WTC11 (cell line): ENCODE measurements at regions of chr15 and their contacts with region 1.

Region 1: GRCh38 chr15:77543159-77543882 is 89.4 kb downstream of the LINGO1 start:
- DNase-seq: peak; percentile 90
- ATAC-seq: peak; percentile 76
- H3K4me3 Mint-ChIP-seq: no peak overlapping the region; the same call in 1 of the 2 replicates
- H3K27ac Mint-ChIP-seq: 0 out of 2 replicates have a peak overlapping the region, but pooled peaks have one; percentile 53
- H3K4me1 Mint-ChIP-seq: peaks cover 49% of the 10 kb centered on the region
- H3K27me3 Mint-ChIP-seq: peaks cover 5% of the 10 kb centered on the region
- CTCF ChIP-seq: peak; percentile 87

Region 2: DNA sequence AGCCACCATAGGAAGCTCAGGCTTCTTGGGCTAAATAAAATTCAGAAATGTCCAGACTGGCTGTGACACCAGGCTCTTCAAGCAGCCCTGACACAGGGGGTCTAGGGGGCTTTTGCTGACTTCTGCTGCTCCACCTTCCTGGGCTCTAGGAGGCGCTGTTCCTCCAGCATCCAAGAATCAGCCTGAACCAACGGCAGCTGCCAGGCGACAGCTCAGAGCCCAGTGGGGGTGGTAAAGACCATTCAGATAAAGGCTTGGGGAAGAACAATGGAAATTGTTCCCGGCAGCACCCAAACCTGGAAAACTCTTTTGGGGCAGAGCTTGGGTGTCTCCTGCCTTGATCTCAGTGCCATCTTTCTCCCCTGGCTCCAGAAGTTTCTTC is 570.0 kb before region 1 on chr15:
- CTCF ChIA-PET with region 1: interaction called, 13 read pairs
- POLR2A ChIA-PET with region 1: no interaction called
- DNase-seq: peak; percentile 84
- ATAC-seq: peak; percentile 97
- H3K4me3 Mint-ChIP-seq: no peak overlapping the region
- H3K27ac Mint-ChIP-seq: no peak overlapping the region
- H3K4me1 Mint-ChIP-seq: peaks cover 4% of the 10 kb centered on the region
- H3K27me3 Mint-ChIP-seq: no peaks in the 10 kb centered on the region
- CTCF ChIP-seq: peak; percentile 67

Region 3: GRCh38 chr15:77118882-77119321 is 424.4 kb before region 1 on chr15:
- CTCF ChIA-PET with region 1: interaction called, 93 read pairs
- POLR2A ChIA-PET with region 1: no interaction called
- DNase-seq: no peak
- ATAC-seq: peak; percentile 68
- H3K4me3 Mint-ChIP-seq: no peak overlapping the region
- H3K27ac Mint-ChIP-seq: no peak overlapping the region
- H3K4me1 Mint-ChIP-seq: peaks cover 28% of the 10 kb centered on the region
- H3K27me3 Mint-ChIP-seq: no peaks in the 10 kb centered on the region
- CTCF ChIP-seq: peak; percentile 35

Region 4: DNA sequence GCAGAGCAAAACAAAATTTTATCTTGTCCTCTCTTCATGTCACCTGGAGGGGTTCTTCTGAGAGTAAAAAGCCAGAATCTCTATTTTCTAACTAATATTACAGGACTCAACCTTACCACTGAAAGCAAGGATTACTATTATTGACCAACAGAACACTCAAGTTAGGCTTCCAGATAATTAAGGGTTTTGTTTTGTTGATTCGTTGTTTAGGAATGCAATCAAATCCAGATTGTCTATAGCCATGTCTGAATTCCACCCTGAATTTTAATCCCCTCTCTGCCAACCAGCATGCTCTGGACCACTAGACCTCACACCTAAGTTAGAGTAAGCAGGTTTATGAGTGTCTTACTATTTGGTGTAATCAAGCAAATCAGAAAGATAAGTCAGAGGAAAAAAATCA is 214.1 kb before region 1 on chr15:
- CTCF ChIA-PET with region 1: no interaction called
- POLR2A ChIA-PET with region 1: no interaction called
- DNase-seq: no peak
- ATAC-seq: no peak; the same call in 1 of the 2 replicates
- H3K4me3 Mint-ChIP-seq: no peak overlapping the region
- H3K27ac Mint-ChIP-seq: no peak overlapping the region
- H3K4me1 Mint-ChIP-seq: peaks cover 27% of the 10 kb centered on the region
- H3K27me3 Mint-ChIP-seq: no peaks in the 10 kb centered on the region
- CTCF ChIP-seq: no peak

Region 5: DNA sequence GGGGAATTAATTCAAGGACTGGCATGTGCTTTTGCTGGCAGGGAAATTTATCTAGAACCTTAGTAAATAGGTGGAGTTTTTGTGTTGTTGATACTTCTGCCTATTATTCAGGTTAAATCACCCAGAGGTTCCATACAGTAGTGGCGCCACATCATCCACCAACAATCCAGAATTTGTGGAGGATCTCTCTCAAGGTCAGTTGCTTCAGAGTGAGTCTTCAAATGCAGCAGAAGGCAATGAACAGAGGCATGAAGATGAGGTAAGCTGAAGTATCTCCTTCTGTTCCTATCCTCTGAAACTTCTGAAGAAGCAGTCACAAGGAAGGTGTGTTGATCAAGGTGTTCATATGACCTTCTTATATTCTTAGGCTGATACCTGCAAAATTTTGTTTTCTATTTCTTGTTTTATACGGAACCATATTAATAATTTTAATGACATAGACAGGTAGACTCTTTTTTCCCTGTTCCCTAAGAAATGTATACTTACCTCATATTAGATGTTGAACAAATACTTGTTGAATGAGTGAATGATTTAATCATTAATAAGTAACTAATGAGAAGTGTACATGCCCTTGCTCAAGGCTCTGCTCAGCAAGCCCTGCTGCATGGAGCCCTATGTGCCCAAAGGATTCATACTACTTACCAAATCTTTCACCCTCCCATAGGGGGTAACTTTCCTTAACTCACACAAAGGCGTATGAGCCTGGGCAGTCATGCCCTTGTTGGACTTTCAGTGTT is 79.0 kb before region 1 on chr15:
- CTCF ChIA-PET with region 1: interaction called, 15 read pairs
- POLR2A ChIA-PET with region 1: no interaction called
- DNase-seq: no peak
- ATAC-seq: no peak
- H3K4me3 Mint-ChIP-seq: no peak overlapping the region
- H3K27ac Mint-ChIP-seq: no peak overlapping the region
- H3K4me1 Mint-ChIP-seq: peaks cover 23% of the 10 kb centered on the region
- H3K27me3 Mint-ChIP-seq: no peaks in the 10 kb centered on the region
- CTCF ChIP-seq: no peak

Region 6: GRCh38 chr15:77514635-77515402 is 28.5 kb before region 1 on chr15:
- CTCF ChIA-PET with region 1: interaction called, 87 read pairs
- POLR2A ChIA-PET with region 1: interaction called, 6 read pairs
- DNase-seq: no peak
- ATAC-seq: peak; percentile 33
- H3K4me3 Mint-ChIP-seq: no peak overlapping the region
- H3K27ac Mint-ChIP-seq: peak overlapping the region; percentile 26
- H3K4me1 Mint-ChIP-seq: peaks cover 71% of the 10 kb centered on the region
- H3K27me3 Mint-ChIP-seq: no peaks in the 10 kb centered on the region; the same call in 1 of the 2 replicates
- CTCF ChIP-seq: no peak

Region 7: DNA sequence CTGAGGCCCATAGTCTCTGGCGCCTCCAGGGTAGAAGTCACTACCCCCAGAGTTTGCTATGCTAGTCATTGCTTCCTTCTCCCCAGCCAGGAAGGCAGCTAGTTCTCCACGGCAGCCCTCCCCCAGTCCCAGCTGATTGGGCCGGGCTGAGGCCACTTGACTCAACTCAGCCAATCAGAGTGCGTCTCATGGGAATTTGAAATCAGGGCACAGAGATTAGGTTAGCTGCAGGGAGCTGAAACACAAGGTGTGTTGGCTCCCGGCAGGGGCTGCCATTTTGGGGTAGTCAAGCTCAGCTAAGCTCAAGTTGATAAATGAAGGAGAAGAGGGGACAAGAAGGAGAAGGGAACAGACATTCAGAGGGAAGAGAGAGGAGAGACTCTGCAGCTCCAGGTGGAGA is 56.6 kb after region 1 on chr15:
- CTCF ChIA-PET with region 1: interaction called, 20 read pairs
- POLR2A ChIA-PET with region 1: no interaction called
- DNase-seq: peak; percentile 53
- ATAC-seq: peak; percentile 53
- H3K4me3 Mint-ChIP-seq: no peak overlapping the region
- H3K27ac Mint-ChIP-seq: peak overlapping the region; percentile 95
- H3K4me1 Mint-ChIP-seq: peaks cover 37% of the 10 kb centered on the region
- H3K27me3 Mint-ChIP-seq: no peaks in the 10 kb centered on the region; the same call in 1 of the 2 replicates
- CTCF ChIP-seq: no peak

Region 8: DNA sequence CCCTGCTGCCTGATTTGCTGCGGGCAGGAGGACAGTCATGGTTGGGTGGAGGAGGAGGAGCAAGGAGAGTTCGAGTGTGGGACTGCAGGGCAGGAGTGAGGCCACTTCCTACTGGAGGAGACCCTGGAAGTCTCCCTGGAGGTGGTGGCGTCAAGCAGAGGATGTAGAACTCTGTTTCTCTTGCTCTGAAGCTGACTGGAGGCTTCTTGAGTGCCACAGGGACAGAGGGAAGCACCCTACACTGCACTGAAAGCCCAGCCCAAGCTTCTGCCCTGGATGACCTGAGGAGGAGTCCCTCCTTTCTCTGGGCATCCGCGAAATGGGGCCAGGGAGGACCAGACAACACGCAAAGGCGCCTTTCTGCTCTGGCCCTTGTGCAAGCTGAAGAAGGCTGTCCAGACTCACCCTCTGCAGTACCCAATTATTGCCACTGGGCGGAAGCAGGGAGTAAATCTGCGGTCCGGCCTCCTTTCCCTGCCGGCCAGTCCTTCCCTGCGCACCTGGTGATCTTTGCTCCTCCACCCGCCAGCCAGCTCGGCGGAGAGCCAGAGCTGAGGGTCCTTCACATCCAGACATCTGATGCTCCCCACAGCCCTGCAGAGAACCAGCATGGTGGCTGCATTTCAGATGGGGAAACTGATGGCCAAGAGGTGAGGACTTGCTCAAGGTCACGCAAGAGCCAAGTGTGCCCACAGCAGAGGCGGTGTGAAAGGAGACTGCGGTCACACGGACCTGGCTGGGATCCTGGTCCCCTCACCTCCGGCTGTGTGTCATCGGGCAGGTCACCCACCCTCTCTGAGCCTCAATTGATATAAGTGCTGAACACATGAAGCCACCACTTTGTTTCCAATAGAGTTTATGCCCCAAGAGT is 327.1 kb after region 1 on chr15:
- CTCF ChIA-PET with region 1: interaction called, 12 read pairs
- POLR2A ChIA-PET with region 1: no interaction called
- DNase-seq: peak; percentile 92
- ATAC-seq: peak; percentile 78
- H3K4me3 Mint-ChIP-seq: no peak overlapping the region
- H3K27ac Mint-ChIP-seq: no peak overlapping the region
- H3K4me1 Mint-ChIP-seq: peaks cover 4% of the 10 kb centered on the region; the same call in 1 of the 2 replicates
- H3K27me3 Mint-ChIP-seq: no peaks in the 10 kb centered on the region; the same call in none of the 2 replicates
- CTCF ChIP-seq: peak; percentile 90